Esophagus muscularis mucosa (tissue), 4 donors: ENCODE measurements at regions of chr11 and their contacts with region 1.

Region 1: DNA sequence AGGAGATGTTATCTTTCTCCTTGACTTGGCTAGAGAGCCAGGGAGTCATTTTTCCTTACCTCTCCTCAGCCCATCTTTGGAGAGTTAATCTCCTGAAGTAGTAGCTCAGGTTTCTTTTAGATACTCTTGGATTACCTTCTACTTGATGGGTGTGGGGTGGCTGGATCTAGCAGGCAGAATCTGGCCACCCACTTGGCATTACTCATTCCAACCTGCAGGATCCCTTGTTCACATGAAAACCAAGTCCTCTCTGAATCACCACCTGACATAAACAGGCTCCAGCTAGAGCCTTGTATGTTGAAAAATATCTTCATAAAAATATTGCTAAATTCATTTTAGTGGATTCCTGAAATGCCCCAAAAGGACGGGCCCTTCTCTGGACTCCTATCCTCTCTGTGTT is 250.6 kb upstream of the PLET1 start:
- DNase-seq: peak; percentile 83
- H3K4me3 ChIP-seq: no peak overlapping the region
- H3K27ac ChIP-seq: no peak overlapping the region
- H3K4me1 ChIP-seq: no peaks in the 10 kb centered on the region
- H3K27me3 ChIP-seq: no peaks in the 10 kb centered on the region
- CTCF ChIP-seq: no peak
- EP300 ChIP-seq: no peak
- POLR2A ChIP-seq: no peak

Region 2: DNA sequence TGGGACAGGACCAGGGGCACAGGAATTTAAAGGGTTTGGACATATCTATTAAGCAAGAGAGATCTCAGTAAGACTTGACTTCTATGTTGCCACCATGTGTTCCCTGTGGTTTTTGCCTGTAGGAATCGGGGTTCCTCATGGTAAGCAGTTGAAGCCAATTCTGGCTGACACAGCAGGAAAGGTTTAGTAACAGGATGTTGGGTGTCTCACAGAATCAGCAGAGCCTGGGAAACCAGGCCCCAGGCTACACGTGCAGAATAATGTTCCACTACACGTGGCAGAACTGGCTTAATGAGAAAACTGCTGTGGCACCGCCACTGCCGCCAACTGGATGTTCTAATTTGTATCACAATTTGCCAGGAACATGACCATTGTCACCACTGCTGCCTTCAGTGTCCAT is 14.0 kb after region 1 on chr11:
- intact Hi-C with region 1: loop called (anchors 2 kb)
- DNase-seq: no peak
- H3K4me3 ChIP-seq: no peak overlapping the region
- H3K27ac ChIP-seq: peak overlapping the region in 2 of 4 donors; percentile 6 to 13
- H3K4me1 ChIP-seq: peaks cover 20 to 40% (median 35%) of the 10 kb centered on the region in 4 donors
- H3K27me3 ChIP-seq: no peaks in the 10 kb centered on the region
- CTCF ChIP-seq: no peak
- EP300 ChIP-seq: no peak
- POLR2A ChIP-seq: no peak